Activated T-helper 2 cell treated with anti-CD3 and anti-CD28 coated beads, Interferon-gamma antibody, Interleukin-2, Interleukin-4, amounts not matched to agents 10 μg/mL and 5 μg/mL and 100 μg/mL, durations not matched to agents 14 hours and 24 hours and 36 hours (primary cell): ENCODE measurements at regions of chr3 and their contacts with region 1.

Region 1: DNA sequence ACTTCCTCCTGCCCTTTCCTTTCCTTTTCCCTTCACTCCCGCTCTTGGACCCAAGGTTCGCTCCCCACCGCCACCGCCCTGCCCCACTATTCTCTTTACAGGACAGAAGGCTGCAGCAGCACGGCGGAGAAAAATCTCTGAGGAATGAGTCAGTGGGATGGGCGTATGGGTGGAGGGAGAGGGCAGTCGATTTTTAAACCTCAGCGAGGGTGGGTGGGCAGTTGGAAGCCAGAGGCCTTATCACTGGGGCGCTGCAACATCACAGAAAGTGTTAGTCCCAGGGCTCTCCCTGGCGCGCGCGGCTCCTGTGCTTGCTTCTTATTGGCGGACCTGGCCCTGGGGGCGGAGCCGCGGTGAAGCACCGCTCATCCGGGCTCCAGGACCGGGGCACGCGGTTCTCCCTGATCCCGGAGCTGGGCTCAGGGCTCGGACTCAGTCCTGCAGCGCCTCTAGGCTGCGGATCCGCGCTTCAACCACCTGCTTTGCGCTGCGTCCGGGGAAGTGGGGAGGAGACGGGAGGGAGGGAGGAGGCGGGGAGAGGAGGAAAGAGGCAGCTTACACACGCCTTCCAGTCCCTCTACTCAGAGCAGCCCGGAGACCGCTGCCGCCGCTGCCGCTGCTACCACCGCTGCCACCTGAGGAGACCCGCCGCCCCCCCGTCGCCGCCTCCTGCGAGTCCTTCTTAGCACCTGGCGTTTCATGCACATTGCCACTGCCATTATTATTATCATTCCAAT is at the start of gene ALCAM:
- DNase-seq: peak; percentile 77
- H3K4me3 Mint-ChIP-seq: peak within 1 kb of the TSS; percentile 94
- H3K27ac Mint-ChIP-seq: peak within 1 kb of the TSS; percentile 100
- H3K4me1 Mint-ChIP-seq: peaks cover 44% of the 10 kb centered on the region
- H3K27me3 Mint-ChIP-seq: peaks cover 22% of the 10 kb centered on the region
- total RNA-seq, gene ALCAM: 36.7 and 37.3 TPM in 2 replicates

Region 2: GRCh38 chr3:104596551-104596950 is 769.9 kb before region 1 on chr3:
- intact Hi-C with region 1: loop called (anchors 5 kb)
- DNase-seq: no peak
- H3K4me3 Mint-ChIP-seq: no peak overlapping the region
- H3K27ac Mint-ChIP-seq: no peak overlapping the region
- H3K4me1 Mint-ChIP-seq: no peaks in the 10 kb centered on the region
- H3K27me3 Mint-ChIP-seq: peaks cover 2% of the 10 kb centered on the region

Region 3: GRCh38 chr3:105339946-105340345 is 26.5 kb before region 1 on chr3:
- intact Hi-C with region 1: no loop called
- DNase-seq: no peak
- H3K4me3 Mint-ChIP-seq: no peak overlapping the region
- H3K27ac Mint-ChIP-seq: no peak overlapping the region
- H3K4me1 Mint-ChIP-seq: no peaks in the 10 kb centered on the region
- H3K27me3 Mint-ChIP-seq: peaks cover 15% of the 10 kb centered on the region

Region 4: GRCh38 chr3:105385819-105386508 is 19.5 kb after region 1 on chr3:
- intact Hi-C with region 1: no loop called
- DNase-seq: no peak
- H3K4me3 Mint-ChIP-seq: no peak overlapping the region
- H3K27ac Mint-ChIP-seq: no peak overlapping the region
- H3K4me1 Mint-ChIP-seq: peaks cover 3% of the 10 kb centered on the region
- H3K27me3 Mint-ChIP-seq: peaks cover 3% of the 10 kb centered on the region

Region 5: GRCh38 chr3:105431200-105431599 is 64.7 kb after region 1 on chr3:
- intact Hi-C with region 1: no loop called
- DNase-seq: no peak
- H3K4me3 Mint-ChIP-seq: no peak overlapping the region
- H3K27ac Mint-ChIP-seq: no peak overlapping the region
- H3K4me1 Mint-ChIP-seq: no peaks in the 10 kb centered on the region
- H3K27me3 Mint-ChIP-seq: no peaks in the 10 kb centered on the region

Region 6: DNA sequence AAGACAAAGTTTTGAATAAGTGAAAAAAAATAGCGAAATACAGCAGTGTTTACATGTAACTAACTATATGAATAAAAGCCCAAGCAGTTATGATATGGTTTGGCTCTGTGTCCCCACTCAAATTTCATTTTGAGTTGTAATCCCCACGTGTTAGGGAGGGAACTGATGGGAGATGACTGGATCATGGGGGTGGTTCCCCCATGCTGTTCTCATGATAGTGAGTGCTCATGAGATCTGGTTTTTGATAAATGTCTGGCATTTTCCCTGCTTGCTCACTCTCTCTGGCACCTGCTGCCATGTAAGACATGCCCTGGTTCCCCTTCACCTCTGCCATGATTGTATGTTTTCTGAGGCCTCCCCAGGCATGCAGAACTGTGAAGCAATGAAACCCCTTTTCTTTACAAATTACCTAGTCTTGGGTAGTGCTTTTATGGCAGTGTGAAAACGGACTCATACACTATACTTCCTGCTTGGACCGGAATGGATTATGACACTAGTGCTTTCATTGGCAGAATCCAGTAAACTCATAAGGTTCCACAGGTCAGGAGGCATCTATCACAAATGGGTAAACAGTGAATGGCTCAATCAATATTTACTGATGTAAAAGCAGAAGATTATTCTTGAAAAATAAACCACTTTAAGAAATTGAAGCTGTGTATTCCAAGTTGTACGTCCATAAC is 310.3 kb after region 1 on chr3:
- intact Hi-C with region 1: loop called (anchors 1 kb)
- DNase-seq: no peak
- H3K4me3 Mint-ChIP-seq: no peak overlapping the region
- H3K27ac Mint-ChIP-seq: peak overlapping the region; percentile 74
- H3K4me1 Mint-ChIP-seq: peaks cover 23% of the 10 kb centered on the region
- H3K27me3 Mint-ChIP-seq: no peaks in the 10 kb centered on the region

Region 7: DNA sequence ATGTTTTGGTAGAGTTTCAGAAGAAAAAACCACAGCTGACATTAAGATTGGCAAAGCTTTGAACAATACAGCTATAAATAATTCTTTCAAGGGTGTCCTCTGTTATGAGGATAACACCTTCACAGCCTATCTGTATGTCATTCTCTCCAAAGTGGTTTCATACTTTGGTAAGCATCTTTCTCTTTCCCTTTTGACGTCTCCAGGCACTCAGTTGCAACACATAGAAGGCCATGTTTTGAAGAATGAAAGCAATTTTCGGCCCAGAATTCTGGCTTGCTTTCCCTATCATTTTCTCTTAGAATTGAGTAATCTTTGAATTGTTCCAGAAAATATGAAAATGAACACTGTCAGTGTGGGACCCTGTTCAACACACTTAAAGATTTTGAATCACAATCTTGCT is 702.3 kb after region 1 on chr3:
- intact Hi-C with region 1: loop called (anchors 2 kb)
- DNase-seq: no peak
- H3K4me3 Mint-ChIP-seq: no peak overlapping the region
- H3K27ac Mint-ChIP-seq: peak overlapping the region; percentile 83
- H3K4me1 Mint-ChIP-seq: peaks cover 15% of the 10 kb centered on the region
- H3K27me3 Mint-ChIP-seq: no peaks in the 10 kb centered on the region

Region 8: DNA sequence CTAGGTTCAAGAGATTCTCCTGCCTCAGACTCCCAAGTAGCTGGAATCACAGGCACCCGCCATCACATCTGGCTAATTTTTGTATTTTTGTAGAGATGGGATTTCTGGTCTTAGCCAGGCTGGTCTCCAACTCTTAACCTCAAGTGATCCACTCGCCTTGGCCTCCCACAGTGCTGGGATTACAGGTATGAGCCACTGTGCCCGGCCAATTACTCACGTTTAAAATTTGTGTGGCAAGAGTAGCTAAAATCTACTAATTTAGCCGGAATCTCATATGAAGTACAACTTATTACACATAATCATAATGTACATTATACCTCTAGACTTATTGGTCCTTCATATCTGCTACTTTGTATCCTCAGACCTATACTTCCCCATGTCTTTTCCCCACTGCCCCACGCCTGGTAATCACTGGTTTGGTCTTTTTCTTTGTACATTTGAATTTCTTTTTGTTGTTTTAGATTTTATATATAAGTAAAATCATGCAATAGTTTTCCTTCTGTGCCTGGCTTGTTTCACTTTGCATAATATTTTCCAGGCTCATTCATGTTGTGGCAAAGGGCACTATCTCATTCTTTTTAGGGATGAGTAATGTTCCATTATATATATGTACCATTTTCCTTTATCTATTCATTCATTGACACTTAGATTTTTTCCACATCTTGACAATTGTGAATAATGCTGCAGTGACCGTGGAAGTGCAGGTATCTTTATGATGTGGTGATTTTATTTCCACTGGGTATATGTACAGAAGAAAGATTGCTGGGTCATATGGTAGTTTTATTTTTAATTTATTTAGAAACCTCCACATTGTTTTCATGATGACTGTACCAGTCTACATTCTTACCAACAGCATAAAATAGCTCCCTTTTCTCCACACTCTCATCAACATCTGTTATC is 1107.3 kb after region 1 on chr3:
- intact Hi-C with region 1: loop called (anchors 1 kb)
- DNase-seq: no peak
- H3K4me3 Mint-ChIP-seq: no peak overlapping the region
- H3K27ac Mint-ChIP-seq: peak overlapping the region; percentile 84
- H3K4me1 Mint-ChIP-seq: peaks cover 7% of the 10 kb centered on the region
- H3K27me3 Mint-ChIP-seq: no peaks in the 10 kb centered on the region